ENCODE measurements at regions of chr12 and their contacts with region 1.

Region 1: DNA sequence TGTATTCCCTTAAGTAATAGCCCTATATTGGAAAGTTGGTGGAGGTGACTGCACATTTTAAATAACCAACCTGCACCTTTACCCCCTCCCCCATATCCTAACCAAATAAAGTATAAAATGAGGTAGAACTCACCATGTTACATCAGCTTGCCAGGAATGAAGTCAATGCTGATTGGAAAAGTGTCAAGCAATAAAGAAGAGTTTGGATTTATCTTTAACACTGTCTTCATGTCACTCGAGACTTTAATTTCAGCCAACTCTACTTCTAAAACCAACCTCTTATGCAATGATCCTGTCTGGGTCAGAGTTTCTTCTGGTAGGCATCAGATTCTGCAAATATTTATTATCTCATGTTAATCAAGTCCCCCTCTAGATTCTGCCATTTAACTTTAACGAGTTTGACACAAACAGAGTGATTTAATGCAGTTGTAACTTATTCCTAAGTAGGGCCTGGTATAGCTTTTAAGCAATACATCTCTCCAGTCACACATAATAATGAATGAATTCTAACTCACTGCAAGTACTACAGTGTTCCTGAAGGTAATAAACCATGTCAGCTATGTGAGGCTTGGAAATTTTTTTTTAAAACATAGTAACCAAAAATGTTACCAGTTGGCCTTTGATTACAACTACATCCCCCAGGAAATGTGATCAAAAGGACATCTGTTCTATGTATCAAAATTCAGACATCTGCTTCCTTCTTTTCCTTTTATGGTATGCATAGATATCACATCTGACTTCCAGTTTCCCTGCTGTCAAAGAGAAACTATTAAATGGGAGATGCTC is 98.7 kb downstream of the ERGIC2 start:
- DNase-seq: no peak
- ATAC-seq: no peak
- H3K4me3 ChIP-seq: no peak overlapping the region
- H3K27ac ChIP-seq: no peak overlapping the region
- H3K4me1 ChIP-seq: no peaks in the 10 kb centered on the region
- H3K27me3 ChIP-seq: no peaks in the 10 kb centered on the region
- CTCF ChIP-seq: no peak

Region 2: DNA sequence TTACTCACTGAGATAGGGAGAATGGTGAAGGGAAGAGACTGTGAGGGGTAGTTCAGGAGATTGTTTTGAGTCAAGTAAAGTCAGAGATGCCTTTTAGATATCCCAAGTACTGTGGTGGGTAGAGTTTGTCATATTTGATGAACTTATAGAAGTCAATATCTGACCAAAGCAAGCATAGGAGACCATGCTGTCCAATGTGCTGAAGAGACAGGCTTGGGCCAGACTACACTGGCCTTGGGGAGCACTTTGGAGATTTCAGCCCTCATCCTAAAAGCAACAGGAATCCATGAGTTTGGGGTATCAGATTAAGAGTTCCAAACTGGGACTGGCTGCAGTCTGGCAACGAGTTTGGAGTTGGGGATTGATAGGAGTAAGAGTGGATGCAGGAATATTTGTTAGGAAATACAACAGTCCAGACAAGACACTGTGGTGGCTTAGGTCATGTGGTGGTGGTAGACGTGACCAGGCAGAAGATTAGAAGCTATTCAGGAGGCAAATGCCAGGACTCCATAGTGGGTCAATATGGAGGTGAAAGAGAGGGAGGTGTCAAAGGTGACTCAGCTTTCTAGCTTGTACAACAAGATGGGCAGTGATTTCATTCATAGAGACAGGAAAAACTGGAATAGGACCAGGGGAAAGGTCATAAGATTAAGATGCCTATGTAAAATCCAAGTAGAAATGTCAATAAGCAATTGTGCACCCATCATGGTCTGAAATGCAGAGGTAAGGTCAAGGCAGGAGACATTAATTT is 51.2 kb before region 1 on chr12:
- CTCF ChIA-PET with region 1: no interaction called
- POLR2A ChIA-PET with region 1: interaction called, 10 read pairs
- in situ Hi-C with region 1: no loop called
- intact Hi-C with region 1: no loop called
- DNase-seq: no peak
- ATAC-seq: no peak
- H3K4me3 ChIP-seq: no peak overlapping the region
- H3K27ac ChIP-seq: no peak overlapping the region
- H3K4me1 ChIP-seq: no peaks in the 10 kb centered on the region
- H3K27me3 ChIP-seq: no peaks in the 10 kb centered on the region
- CTCF ChIP-seq: no peak

Region 3: DNA sequence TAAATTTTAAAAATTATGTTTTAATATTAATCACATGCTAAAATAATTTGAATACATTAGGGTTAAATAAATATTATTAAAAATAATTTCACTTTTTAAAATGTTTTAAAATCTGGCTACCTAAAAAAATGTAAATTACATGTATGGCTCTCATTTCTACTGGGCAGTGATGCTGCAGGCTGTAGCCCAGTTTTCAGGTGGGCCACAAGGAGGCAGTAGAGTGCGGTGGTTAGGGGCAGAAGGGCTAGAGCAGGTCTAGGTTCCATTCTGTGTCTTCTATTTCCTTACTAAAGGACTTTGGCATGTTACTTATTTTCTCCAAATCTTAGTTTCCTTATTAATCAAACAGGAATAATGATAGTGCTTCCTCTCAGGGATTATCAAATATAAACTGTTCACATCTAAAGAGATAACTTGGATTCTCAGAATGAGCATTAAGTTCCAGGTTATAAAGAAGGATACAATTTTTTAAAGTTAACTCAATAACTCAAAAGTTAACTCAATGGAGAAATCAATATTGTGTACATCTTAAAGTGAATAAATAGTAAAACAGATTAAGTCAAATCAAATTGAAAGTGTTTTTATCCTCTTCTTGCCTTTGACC is 270.2 kb after region 1 on chr12:
- CTCF ChIA-PET with region 1: no interaction called
- POLR2A ChIA-PET with region 1: no interaction called
- in situ Hi-C with region 1: no loop called
- intact Hi-C with region 1: no loop called
- DNase-seq: peak; percentile 33
- ATAC-seq: peak; percentile 84
- H3K4me3 ChIP-seq: no peak overlapping the region
- H3K27ac ChIP-seq: no peak overlapping the region
- H3K4me1 ChIP-seq: no peaks in the 10 kb centered on the region
- H3K27me3 ChIP-seq: no peaks in the 10 kb centered on the region; the same call in 1 of the 2 replicates
- CTCF ChIP-seq: peak; percentile 93

Measured in Panc1 (cell line).